ENCODE measurements at regions of chr14 and their contacts with region 1.

Region 1: GRCh38 chr14:27559848-27560247 is 962.0 kb upstream of the NOVA1 start:
- DNase-seq: no peak
- H3K4me3 ChIP-seq: no peak overlapping the region
- H3K27ac ChIP-seq: no peak overlapping the region
- H3K4me1 ChIP-seq: no peaks in the 10 kb centered on the region
- H3K27me3 ChIP-seq: no peaks in the 10 kb centered on the region
- CTCF ChIP-seq: no peak
- EP300 ChIP-seq: no peak
- POLR2A ChIP-seq: no peak

Region 2: DNA sequence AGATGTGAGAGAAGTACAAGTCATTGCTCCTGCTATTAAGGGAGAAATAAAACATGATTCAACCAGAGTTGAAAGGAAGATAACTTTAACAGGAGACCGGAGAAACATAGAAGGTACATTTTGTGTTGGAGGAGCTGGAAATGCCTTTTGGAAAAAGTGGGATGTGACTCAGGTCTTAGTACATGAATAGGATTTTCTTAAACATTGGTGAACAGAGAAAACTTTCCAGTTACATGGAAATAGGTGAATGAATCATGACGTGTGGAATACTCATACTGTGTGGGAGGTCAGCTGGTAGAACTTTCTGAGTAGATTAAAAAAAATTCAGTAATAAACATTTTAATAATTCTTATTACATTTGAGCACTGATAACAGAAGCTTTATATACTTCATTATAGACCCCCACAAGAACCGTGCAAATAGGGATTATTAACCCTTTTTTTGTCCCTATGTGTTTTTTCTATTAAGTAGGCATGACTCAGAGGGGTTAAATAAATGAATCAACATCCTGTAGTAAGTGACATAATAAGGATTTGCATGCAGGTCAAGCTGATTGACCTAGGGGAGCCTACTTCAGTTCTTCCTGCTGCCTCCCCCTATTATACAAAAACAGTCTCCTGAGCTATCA is 1672.5 kb before region 1 on chr14:
- in situ Hi-C with region 1: no loop called
- intact Hi-C with region 1: loop called (anchors 5 kb)
- DNase-seq: no peak
- H3K4me3 ChIP-seq: no peak overlapping the region
- H3K27ac ChIP-seq: no peak overlapping the region
- H3K4me1 ChIP-seq: no peaks in the 10 kb centered on the region
- H3K27me3 ChIP-seq: no peaks in the 10 kb centered on the region
- CTCF ChIP-seq: no peak
- EP300 ChIP-seq: no peak
- POLR2A ChIP-seq: no peak

Region 3: GRCh38 chr14:28101998-28102397 is 542.1 kb after region 1 on chr14:
- in situ Hi-C with region 1: no loop called
- intact Hi-C with region 1: no loop called
- DNase-seq: no peak
- H3K4me3 ChIP-seq: no peak overlapping the region
- H3K27ac ChIP-seq: no peak overlapping the region
- H3K4me1 ChIP-seq: no peaks in the 10 kb centered on the region
- H3K27me3 ChIP-seq: no peaks in the 10 kb centered on the region
- CTCF ChIP-seq: no peak
- EP300 ChIP-seq: no peak
- POLR2A ChIP-seq: no peak